ENCODE measurements at regions of chr11 and their contacts with region 1.

Region 1: DNA sequence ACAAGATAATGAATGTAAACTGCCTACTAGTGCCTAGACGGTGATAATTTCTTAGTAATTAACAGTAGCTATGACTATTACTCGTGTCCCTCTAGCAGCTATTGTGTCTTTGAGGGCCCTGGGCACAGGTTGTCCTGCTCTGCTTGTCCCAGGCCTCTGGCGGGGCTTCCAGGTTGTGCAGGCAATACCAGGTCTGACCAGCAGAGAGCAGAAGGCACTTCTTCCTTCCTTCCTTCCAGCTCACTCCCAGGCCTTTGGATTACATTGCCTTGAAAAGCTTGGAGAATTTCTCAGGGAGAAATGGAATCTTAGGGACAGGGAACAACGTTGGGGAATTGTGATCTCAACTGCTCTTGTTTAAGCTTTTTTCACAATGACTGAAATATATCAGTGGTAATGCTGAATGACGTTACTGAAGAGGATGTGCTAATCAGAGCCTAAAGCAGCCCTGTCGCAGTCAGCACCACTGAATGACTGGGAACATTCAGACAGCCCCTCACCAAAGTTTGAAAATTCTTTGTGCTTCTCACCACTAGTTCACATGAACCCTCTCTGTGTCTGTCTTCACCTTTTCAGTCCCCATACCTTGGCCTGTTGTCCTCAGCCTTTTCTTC is 8.4 kb upstream of the CCKBR start:
- DNase-seq: peak; percentile 49 to 72 (median 59)
- ATAC-seq: peak; percentile 83 to 94 (median 88)
- H3K4me3 ChIP-seq: no peak overlapping the region
- H3K27ac ChIP-seq: peak overlapping the region in 4 of 12 donors; percentile 9 to 70 (median 30)
- H3K4me1 ChIP-seq: peaks cover 0 to 23% (median 2%) of the 10 kb centered on the region in 12 donors
- H3K27me3 ChIP-seq: peaks cover 0 to 14% (median 0%) of the 10 kb centered on the region in 9 donors
- CTCF ChIP-seq: peak; percentile 63 to 87 (median 80)
- POLR2A ChIP-seq: no peak

Region 2: DNA sequence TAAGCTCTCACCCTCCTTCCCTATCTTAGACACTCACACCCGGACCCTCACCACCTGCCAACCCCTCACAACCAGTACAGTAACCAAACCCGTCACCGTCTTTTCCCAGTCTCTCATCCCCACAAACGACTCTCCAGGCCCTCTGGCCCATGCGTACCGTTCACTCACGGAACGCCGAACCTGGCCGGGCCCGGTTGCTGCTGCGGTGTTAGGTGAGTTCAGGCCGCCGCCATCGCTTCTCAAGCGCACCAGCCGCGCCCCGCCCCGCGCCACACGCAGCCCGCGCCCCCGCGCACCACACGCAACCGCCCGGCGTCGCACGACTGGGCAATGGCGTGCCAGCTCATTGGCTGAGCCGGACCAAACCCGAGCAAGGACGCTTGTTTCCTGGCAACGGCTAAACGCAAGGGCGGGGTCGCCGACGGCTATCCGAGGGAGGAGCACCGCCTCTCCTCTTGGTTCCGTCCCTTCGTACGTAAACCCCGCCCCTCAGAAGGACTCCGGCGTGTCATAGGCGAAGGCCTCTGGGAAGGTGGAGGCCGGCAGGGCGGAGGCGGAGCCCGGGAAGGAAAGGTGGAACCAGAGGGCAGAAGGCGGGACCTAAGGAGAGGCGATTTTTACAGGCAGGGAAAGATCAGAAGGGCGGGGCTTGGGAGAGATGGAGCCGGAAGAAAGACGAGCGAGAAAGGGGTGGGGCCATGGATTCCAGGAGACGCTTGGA is 16.7 kb before region 1 on chr11 and contains the start of gene FHIP1B:
- intact Hi-C with region 1: no loop called
- DNase-seq: peak; percentile 100
- ATAC-seq: peak; percentile 98 to 99 (median 99)
- H3K4me3 ChIP-seq: peak within 1 kb of the TSS; percentile 28 to 95 (median 83)
- H3K27ac ChIP-seq: peak within 1 kb of the TSS in 11 of 12 donors; percentile 74 to 91 (median 82)
- H3K4me1 ChIP-seq: peaks cover 0 to 36% (median 14%) of the 10 kb centered on the region in 12 donors
- H3K27me3 ChIP-seq: no peaks in the 10 kb centered on the region
- CTCF ChIP-seq: no peak
- POLR2A ChIP-seq: peak in 1 of 2 donors; percentile 45
- total RNA-seq, gene FHIP1B: 13.1 to 30.3 (median 16.3) TPM

Region 3: GRCh38 chr11:6298605-6299004 is 47.4 kb after region 1 on chr11:
- intact Hi-C with region 1: loop called in 3 of 10 experiments (anchors 5 kb)
- DNase-seq: peak in 4 of 5 donors; percentile 35 to 69 (median 48)
- ATAC-seq: peak; percentile 75 to 93 (median 90)
- H3K4me3 ChIP-seq: no peak overlapping the region
- H3K27ac ChIP-seq: no peak overlapping the region
- H3K4me1 ChIP-seq: no peaks in the 10 kb centered on the region
- H3K27me3 ChIP-seq: no peaks in the 10 kb centered on the region
- CTCF ChIP-seq: peak; percentile 32 to 73 (median 56)
- POLR2A ChIP-seq: no peak